GM12878 (cell line): ENCODE measurements at regions of chr2 and their contacts with region 1.

Region 1: GRCh38 chr2:164757924-164758695 is 83.5 kb downstream of the COBLL1 start:
- DNase-seq: no peak
- ATAC-seq: no peak
- H3K4me3 ChIP-seq: no peak overlapping the region
- H3K27ac ChIP-seq: no peak overlapping the region
- H3K4me1 ChIP-seq: no peaks in the 10 kb centered on the region
- H3K27me3 ChIP-seq: no peaks in the 10 kb centered on the region; a peak in 1 of 4 replicates
- CTCF ChIP-seq: no peak
- EP300 ChIP-seq: no peak
- POLR2A ChIP-seq: no peak
- RAD21 ChIP-seq: no peak

Region 2: GRCh38 chr2:164015328-164016123 is 742.6 kb before region 1 on chr2:
- CTCF ChIA-PET with region 1: no interaction called
- POLR2A ChIA-PET with region 1: no interaction called
- RAD21 ChIA-PET with region 1: no interaction called
- SMC1A ChIA-PET with region 1: no interaction called
- in situ Hi-C with region 1: no loop called
- intact Hi-C with region 1: loop called (anchors 10 kb)
- DNase-seq: peak; percentile 96
- ATAC-seq: peak; percentile 99
- H3K4me3 ChIP-seq: no peak overlapping the region
- H3K27ac ChIP-seq: peak overlapping the region; percentile 56; the same call in 1 of the 2 replicates
- H3K4me1 ChIP-seq: peaks cover 3% of the 10 kb centered on the region; the same call in 1 of the 2 replicates
- H3K27me3 ChIP-seq: no peaks in the 10 kb centered on the region; a peak in 1 of 4 replicates
- CTCF ChIP-seq: no peak
- EP300 ChIP-seq: peak; percentile 73 to 84
- POLR2A ChIP-seq: no peak
- RAD21 ChIP-seq: no peak

Region 3: GRCh38 chr2:164620873-164621626 is 137.1 kb before region 1 on chr2 and contains the start of gene GRB14:
- CTCF ChIA-PET with region 1: no interaction called
- POLR2A ChIA-PET with region 1: no interaction called
- RAD21 ChIA-PET with region 1: no interaction called
- SMC1A ChIA-PET with region 1: no interaction called
- in situ Hi-C with region 1: no loop called
- intact Hi-C with region 1: no loop called
- DNase-seq: no peak
- ATAC-seq: no peak
- H3K4me3 ChIP-seq: no peak within 1 kb of the TSS
- H3K27ac ChIP-seq: no peak within 1 kb of the TSS
- H3K4me1 ChIP-seq: no peaks in the 10 kb centered on the region
- H3K27me3 ChIP-seq: peaks cover 0 to 5% of the 10 kb centered on the region in 2 experiments; a peak in 3 of 4 replicates
- CTCF ChIP-seq: no peak
- EP300 ChIP-seq: no peak
- POLR2A ChIP-seq: no peak
- RAD21 ChIP-seq: no peak
- polyA plus RNA-seq, gene GRB14: not detected

Region 4: DNA sequence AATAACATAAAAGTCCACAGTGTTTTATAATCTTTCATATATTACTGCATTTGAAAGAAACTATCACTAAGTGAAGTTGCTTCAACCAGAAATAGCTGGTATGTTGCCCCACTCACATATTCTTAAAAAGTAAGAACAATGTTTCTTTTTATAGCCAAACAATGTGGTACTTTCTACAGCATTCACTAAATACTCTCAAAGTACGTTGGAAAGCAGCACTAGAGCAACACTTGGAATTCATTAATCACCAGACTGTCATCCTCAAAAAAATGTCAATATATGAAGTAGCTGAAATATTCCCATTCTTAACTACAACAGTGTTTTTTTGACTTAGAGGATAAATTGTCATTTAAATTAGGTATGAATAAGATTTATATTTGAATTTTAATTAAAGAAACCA is 50.7 kb after region 1 on chr2:
- CTCF ChIA-PET with region 1: no interaction called
- POLR2A ChIA-PET with region 1: no interaction called
- RAD21 ChIA-PET with region 1: no interaction called
- SMC1A ChIA-PET with region 1: no interaction called
- in situ Hi-C with region 1: no loop called
- intact Hi-C with region 1: loop called (anchors 5 kb)
- DNase-seq: no peak
- ATAC-seq: no peak
- H3K4me3 ChIP-seq: no peak overlapping the region
- H3K27ac ChIP-seq: no peak overlapping the region
- H3K4me1 ChIP-seq: no peaks in the 10 kb centered on the region
- H3K27me3 ChIP-seq: no peaks in the 10 kb centered on the region
- CTCF ChIP-seq: no peak
- EP300 ChIP-seq: no peak
- POLR2A ChIP-seq: no peak
- RAD21 ChIP-seq: no peak